Common myeloid progenitor, CD34-positive (primary cell): ENCODE measurements at regions of chr1 and their contacts with region 1.

Region 1: GRCh38 chr1:212368073-212368484 is 46.6 kb downstream of the PACC1 start:
- DNase-seq: peak; percentile 75 to 89 (median 86)
- H3K4me3 ChIP-seq: no peak overlapping the region
- H3K27ac ChIP-seq: no peak overlapping the region
- H3K4me1 ChIP-seq: no peaks in the 10 kb centered on the region
- H3K27me3 ChIP-seq: no peaks in the 10 kb centered on the region

Region 2: DNA sequence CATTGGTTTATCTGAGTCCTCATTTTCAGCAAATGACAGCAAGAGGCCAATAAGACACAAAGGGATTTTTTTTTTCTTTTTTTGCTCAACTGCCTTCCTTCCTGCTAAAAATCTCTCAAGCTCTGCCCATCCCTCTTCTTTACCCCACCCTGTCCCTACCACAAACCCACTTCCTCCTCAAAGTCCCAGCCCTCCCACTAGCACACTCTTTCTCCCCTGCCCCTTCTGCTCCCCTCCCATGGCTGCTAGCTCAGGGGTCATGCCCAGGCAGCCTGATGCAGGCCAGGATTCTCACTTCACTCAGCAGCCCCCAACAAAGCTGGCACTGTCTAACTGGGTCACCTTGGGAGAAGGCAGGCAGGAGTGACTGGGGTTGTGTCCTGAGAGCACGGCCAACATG is 111.7 kb before region 1 on chr1:
- CTCF ChIA-PET with region 1: no interaction called
- POLR2A ChIA-PET with region 1: no interaction called
- DNase-seq: peak; percentile 70 to 93 (median 89)
- H3K4me3 ChIP-seq: peak overlapping the region in 3 of 7 experiments; percentile 24 to 39 (median 34)
- H3K27ac ChIP-seq: peak overlapping the region in 1 of 2 experiments; percentile 58
- H3K4me1 ChIP-seq: peaks cover 15 to 35% (median 30%) of the 10 kb centered on the region in 4 experiments
- H3K27me3 ChIP-seq: no peaks in the 10 kb centered on the region

Region 3: GRCh38 chr1:212302745-212303383 is 65.2 kb before region 1 on chr1:
- CTCF ChIA-PET with region 1: no interaction called
- POLR2A ChIA-PET with region 1: no interaction called
- DNase-seq: no peak
- H3K4me3 ChIP-seq: no peak overlapping the region
- H3K27ac ChIP-seq: no peak overlapping the region
- H3K4me1 ChIP-seq: peaks cover 0 to 3% (median 0%) of the 10 kb centered on the region in 4 experiments
- H3K27me3 ChIP-seq: no peaks in the 10 kb centered on the region

Region 4: DNA sequence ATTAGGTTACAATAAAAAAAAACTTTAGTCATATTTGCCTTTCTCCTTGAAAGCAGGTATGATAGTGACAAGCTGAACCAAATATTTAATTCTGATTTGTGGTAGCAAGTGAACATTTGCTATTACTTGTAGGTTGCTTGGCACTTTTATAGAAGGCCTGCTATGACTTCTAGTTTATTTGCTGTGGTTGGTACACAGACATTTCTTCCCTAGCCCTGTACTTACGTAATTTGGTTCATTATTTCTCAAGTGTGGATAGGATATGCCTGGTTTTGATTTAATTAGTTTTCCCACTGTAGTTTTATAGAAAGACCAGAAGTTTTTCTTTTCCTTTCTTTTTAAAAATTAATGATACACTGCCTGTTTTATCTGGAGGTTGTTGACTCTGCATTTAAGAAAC is 27.0 kb before region 1 on chr1:
- CTCF ChIA-PET with region 1: interaction called, 14 read pairs
- POLR2A ChIA-PET with region 1: no interaction called
- DNase-seq: no peak
- H3K4me3 ChIP-seq: no peak overlapping the region
- H3K27ac ChIP-seq: no peak overlapping the region
- H3K4me1 ChIP-seq: no peaks in the 10 kb centered on the region
- H3K27me3 ChIP-seq: no peaks in the 10 kb centered on the region

Region 5: DNA sequence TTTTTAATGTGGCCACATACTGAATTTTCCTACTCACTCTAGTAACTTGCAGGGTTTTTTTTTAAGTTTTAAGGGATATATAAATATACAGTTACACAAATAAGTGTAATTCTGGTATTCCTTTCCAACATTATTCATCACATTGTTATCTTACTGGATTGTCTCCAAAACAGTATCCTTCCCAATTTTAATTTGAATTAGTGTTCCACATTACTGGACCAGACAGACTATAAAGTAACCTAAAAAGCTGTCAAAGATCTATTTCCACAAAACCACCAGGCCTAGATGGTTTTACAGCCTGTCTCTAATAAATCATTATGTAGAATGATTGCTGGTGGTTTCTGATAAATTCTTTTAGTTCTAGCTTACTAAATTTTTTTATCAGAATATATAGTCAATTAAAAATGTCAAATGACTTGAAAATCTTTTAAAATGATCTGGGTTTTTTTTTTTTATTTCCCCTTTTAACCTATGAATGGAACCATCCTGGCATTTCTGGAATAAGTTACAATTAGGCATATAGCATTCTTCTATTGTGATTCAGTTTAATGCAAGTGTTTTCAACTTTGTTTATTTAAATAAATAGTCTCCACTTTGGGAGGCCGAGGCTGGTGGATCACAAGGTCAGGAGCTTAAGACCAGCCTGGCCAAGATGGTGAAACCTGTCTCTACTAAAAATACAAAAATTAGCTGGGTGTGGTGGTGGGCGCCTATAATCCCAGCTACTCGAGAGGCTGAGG is 12.7 kb before region 1 on chr1:
- CTCF ChIA-PET with region 1: interaction called, 12 read pairs
- POLR2A ChIA-PET with region 1: no interaction called
- DNase-seq: no peak
- H3K4me3 ChIP-seq: no peak overlapping the region
- H3K27ac ChIP-seq: no peak overlapping the region
- H3K4me1 ChIP-seq: no peaks in the 10 kb centered on the region
- H3K27me3 ChIP-seq: no peaks in the 10 kb centered on the region

Region 6: DNA sequence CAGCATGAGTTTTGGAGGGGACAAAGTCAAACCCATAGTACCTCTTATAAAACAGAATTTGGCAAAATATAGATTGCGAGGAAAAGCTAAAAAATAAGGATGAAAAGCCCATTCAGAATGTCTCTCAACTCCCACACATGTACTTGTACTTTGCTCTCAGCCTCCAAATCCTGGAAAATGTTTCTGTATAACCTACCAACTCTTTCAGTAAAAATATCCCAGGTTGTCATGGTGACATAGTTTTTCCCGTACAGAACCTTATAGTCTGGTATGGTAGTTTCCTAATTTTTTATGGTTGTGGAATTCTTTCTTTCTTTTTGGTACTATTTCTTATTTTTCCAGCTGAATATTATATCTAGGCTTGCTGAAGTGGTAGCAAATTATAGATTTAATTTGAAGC is 667.5 kb after region 1 on chr1:
- CTCF ChIA-PET with region 1: no interaction called
- POLR2A ChIA-PET with region 1: no interaction called
- DNase-seq: no peak
- H3K4me3 ChIP-seq: no peak overlapping the region
- H3K27ac ChIP-seq: no peak overlapping the region
- H3K4me1 ChIP-seq: no peaks in the 10 kb centered on the region
- H3K27me3 ChIP-seq: no peaks in the 10 kb centered on the region